ENCODE measurements at regions of chr13 and their contacts with region 1.

Region 1: GRCh38 chr13:20160847-20161274 is at the start of gene GJA3:
- DNase-seq: no peak
- H3K4me3 ChIP-seq: peak within 1 kb of the TSS in 55 of 59 donors; percentile 4 to 65 (median 41)
- H3K27ac ChIP-seq: no peak within 1 kb of the TSS
- H3K27me3 ChIP-seq: peaks cover 4 to 85% (median 72%) of the 10 kb centered on the region in 45 donors
- CTCF ChIP-seq: peak in 1 of 56 donors; percentile 13
- total RNA-seq, gene GJA3: 0.07 to 0.24 (median 0.12) TPM in 24 of 120 experiments, not detected in the others

Region 2: DNA sequence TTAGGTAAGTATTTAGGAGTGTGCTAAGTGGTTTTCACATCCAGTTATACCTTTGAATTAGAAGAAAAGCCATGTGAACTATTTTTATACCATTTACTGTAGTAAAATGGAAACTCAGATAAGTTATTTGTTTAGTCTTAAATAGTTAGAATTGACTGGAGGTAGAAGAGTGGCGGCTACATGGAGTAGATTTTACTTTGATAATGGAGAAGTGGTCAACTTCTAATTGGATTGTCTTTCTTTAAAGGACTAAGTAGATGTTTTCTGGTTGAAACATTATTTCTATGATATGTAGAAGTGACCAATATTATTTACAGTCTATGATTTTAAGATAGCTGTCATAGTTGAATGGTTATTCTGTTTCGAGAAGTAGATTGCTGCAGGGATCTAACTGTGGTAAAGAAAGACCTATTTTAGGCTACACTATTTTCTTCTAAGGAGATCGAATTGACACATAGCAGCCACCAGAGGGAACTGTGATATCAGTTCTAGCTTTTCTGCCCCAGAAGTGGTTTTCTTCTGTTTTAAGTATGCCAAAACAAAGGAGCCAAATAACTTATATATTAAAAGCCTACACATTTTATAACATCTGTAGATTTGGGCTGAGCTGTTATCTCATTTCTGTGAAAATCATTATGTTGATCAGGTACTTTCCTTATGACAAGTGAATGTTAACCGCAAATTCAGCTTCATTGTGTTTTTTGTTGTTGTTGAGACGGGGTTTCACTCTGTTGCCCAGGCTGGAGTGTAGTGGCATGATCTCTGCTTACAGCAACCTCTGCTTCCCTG is 176.2 kb before region 1 on chr13:
- intact Hi-C with region 1: loop called in 1 of 2 experiments (anchors 5 kb)
- DNase-seq: no peak
- H3K4me3 ChIP-seq: no peak overlapping the region
- H3K27ac ChIP-seq: peak overlapping the region in 4 of 59 donors; percentile 4 to 39 (median 19)
- H3K27me3 ChIP-seq: no peaks in the 10 kb centered on the region
- CTCF ChIP-seq: peak in 52 of 56 donors; percentile 22 to 69 (median 52)

Region 3: DNA sequence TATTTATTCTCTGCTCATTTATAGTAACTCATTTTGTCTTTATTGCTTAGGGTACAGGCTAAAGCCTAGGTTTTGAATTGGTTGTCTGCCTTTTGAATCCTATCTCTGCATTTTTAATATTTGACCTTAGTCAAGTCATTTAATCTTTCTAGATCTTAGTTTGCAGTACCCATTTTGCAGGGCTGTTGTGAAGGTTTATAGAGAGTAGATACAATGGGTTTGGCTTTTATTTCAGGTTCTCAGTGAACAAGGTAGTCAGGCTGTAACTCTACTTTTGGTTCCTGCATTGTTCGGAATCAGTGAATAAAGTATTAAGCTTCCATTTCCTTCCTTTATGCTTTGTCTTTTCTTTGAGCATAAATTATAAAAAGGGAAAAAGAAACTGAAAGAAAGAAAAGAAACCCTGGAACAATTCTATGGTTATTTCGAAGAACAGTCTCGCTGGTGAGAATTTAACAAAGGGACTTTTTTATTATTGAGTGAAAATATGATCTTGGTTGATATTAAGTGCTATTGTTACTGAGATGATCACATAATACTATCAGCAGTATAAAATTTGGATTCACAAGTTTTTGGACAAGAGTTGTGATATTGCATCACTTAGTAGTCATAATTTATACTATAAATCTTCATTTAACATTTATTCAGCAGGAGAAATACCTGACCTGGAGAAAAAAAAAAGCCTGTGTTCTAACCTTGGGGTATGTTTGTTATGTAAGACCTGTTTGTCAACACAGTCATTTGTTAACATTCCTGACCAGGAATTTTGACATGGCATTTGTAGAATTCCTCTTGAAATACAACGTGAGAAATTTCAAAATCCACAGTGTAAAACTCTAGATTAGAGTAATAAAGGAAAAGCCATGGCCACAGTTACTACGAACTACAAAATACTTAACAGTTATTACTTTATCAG is 111.0 kb before region 1 on chr13:
- intact Hi-C with region 1: loop called in 1 of 2 experiments (anchors 10 kb)
- DNase-seq: no peak
- H3K4me3 ChIP-seq: peak overlapping the region in 9 of 59 donors; percentile 1 to 42 (median 7)
- H3K27ac ChIP-seq: peak overlapping the region in 9 of 59 donors; percentile 1 to 47 (median 30)
- H3K27me3 ChIP-seq: no peaks in the 10 kb centered on the region
- CTCF ChIP-seq: no peak

Region 4: GRCh38 chr13:20090349-20090748 is 70.5 kb before region 1 on chr13:
- intact Hi-C with region 1: loop called (anchors 2 kb)
- DNase-seq: no peak
- H3K4me3 ChIP-seq: no peak overlapping the region
- H3K27ac ChIP-seq: peak overlapping the region in 1 of 59 donors; percentile 50
- H3K27me3 ChIP-seq: no peaks in the 10 kb centered on the region
- CTCF ChIP-seq: peak in 41 of 56 donors; percentile 5 to 66 (median 38)

Region 5: DNA sequence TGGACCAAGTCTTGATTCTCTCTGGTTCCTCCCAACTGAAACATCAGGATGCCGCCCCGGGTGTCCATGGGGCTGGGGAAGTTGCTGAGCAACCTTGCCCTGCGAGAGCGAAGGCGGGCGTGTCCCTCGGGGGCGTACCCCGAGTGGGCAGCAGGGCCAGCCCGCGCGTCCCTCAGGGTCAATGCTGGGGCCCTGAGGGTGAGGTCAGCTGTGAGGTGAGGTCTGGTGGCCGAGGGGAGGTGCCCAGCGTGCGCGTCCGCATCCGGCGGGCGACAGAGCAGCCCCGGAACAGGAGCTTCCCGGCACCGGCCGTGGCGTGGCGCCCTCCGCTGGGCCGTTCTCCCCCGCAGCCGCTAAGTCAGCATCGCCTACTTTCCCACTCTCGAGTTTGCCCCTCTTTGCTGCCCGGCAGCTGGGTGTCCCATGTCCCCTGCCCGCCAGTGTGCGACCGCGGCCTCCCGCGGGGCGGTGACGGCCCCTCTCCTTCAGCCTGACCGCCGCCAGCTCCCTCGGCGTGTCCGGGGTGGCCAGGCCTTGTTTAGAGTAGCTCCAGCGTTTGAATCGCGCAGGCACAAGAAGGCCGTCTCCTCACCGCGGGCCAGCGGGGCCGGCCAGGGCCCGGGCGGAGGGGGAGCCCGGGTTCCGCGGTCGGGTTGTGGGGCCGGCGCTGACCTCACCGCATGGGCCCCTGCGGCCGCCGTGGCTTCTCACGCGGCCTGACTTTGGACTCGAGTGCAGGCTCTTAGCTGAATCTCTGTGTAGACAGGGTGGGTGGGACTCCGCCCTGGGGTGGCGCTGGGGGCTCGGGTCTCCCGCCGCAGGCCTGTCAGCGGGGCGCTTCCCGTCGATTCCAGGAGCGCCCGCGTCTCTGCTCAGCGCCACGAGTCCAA is 33.0 kb before region 1 on chr13:
- intact Hi-C with region 1: loop called in 1 of 2 experiments (anchors 5 kb)
- DNase-seq: peak in 8 of 10 donors; percentile 31 to 80 (median 58)
- H3K4me3 ChIP-seq: peak overlapping the region; percentile 45 to 86 (median 67)
- H3K27ac ChIP-seq: peak overlapping the region in 51 of 59 donors; percentile 7 to 93 (median 74)
- H3K27me3 ChIP-seq: peaks cover 0 to 41% (median 15%) of the 10 kb centered on the region in 45 donors
- CTCF ChIP-seq: peak in 52 of 56 donors; percentile 22 to 76 (median 52)